ENCODE measurements at regions of chr16 and their contacts with region 1.

Region 1: GRCh38 chr16:31382485-31383161 is 10.5 kb upstream of the ITGAD start:
- DNase-seq: peak; percentile 8
- ATAC-seq: peak; percentile 83
- H3K4me3 ChIP-seq: no peak overlapping the region
- H3K27ac ChIP-seq: no peak overlapping the region
- H3K4me1 ChIP-seq: peaks cover 11% of the 10 kb centered on the region
- H3K27me3 ChIP-seq: no peaks in the 10 kb centered on the region
- CTCF ChIP-seq: peak; percentile 96

Region 2: GRCh38 chr16:31260136-31260918 is 122.3 kb before region 1 on chr16:
- CTCF ChIA-PET with region 1: interaction called, 15 read pairs
- POLR2A ChIA-PET with region 1: no interaction called
- in situ Hi-C with region 1: no loop called
- intact Hi-C with region 1: no loop called
- DNase-seq: no peak
- ATAC-seq: no peak
- H3K4me3 ChIP-seq: no peak overlapping the region
- H3K27ac ChIP-seq: no peak overlapping the region
- H3K4me1 ChIP-seq: peaks cover 8% of the 10 kb centered on the region; the same call in 1 of the 2 replicates
- H3K27me3 ChIP-seq: no peaks in the 10 kb centered on the region
- CTCF ChIP-seq: no peak

Region 3: GRCh38 chr16:31420037-31420436 is 37.4 kb after region 1 on chr16:
- CTCF ChIA-PET with region 1: no interaction called
- POLR2A ChIA-PET with region 1: no interaction called
- in situ Hi-C with region 1: no loop called
- intact Hi-C with region 1: no loop called
- DNase-seq: no peak
- ATAC-seq: no peak
- H3K4me3 ChIP-seq: no peak overlapping the region
- H3K27ac ChIP-seq: no peak overlapping the region
- H3K4me1 ChIP-seq: no peaks in the 10 kb centered on the region
- H3K27me3 ChIP-seq: no peaks in the 10 kb centered on the region
- CTCF ChIP-seq: no peak

Region 4: GRCh38 chr16:31487720-31488467 is 105.3 kb after region 1 on chr16:
- CTCF ChIA-PET with region 1: no interaction called
- POLR2A ChIA-PET with region 1: no interaction called
- in situ Hi-C with region 1: no loop called
- intact Hi-C with region 1: no loop called
- DNase-seq: no peak
- ATAC-seq: peak; percentile 91
- H3K4me3 ChIP-seq: peak overlapping the region; percentile 57 to 72
- H3K27ac ChIP-seq: peak overlapping the region; percentile 54; the same call in 1 of the 2 replicates
- H3K4me1 ChIP-seq: no peaks in the 10 kb centered on the region
- H3K27me3 ChIP-seq: no peaks in the 10 kb centered on the region
- CTCF ChIP-seq: no peak

Region 5: DNA sequence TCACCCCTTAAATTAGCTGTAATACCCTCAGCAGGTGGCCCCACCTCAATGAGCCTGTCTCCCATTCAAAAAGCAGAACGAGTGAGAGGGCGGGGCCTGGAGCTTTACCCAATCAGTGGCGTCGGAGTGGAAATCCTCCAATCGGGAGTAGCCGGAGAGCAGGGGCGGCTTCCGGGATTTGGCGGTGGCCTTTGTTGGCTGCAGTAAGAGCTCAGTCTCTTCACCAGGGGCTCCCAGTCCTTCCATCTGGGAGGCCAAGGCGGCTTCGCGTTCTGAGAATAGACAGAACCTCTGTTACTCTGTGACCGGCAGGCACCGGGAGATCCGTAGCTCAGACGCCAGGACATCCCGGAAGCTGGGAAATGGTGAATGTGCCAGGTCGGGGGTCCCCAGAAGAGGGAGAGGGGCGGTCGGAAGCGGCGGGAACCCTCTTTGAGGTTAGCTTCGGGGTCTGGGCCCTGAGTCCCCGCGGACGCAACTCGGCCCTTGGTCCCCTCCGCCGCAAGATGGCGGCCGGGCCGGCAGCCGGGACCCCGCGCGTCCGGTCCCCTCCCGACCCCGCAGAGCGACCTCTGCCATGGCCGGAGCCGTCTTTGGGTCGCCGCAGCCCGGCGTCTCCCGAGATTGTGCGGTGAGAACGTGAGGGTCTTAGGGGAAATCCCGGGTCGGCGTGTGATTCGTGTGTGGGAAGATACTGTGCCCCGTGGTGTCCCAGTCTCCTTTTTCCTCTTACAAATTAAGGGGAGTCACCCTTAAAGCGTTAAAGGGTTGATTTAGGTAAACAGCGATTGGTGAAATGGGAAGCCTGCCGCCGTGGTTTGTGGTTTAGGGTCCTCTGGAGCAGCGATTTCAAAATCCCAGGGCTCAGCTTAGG is 330.7 kb after region 1 on chr16:
- CTCF ChIA-PET with region 1: no interaction called
- POLR2A ChIA-PET with region 1: no interaction called
- in situ Hi-C with region 1: no loop called
- intact Hi-C with region 1: no loop called
- DNase-seq: peak; percentile 61
- ATAC-seq: peak; percentile 97
- H3K4me3 ChIP-seq: peak overlapping the region; percentile 92 to 95
- H3K27ac ChIP-seq: peak overlapping the region; percentile 97
- H3K4me1 ChIP-seq: peaks cover 6% of the 10 kb centered on the region
- H3K27me3 ChIP-seq: no peaks in the 10 kb centered on the region
- CTCF ChIP-seq: no peak

Measured in Panc1 (cell line).